Right ventricle myocardium superior (tissue), 1 donor: ENCODE measurements at regions of chr19 and their contacts with region 1.

Region 1: DNA sequence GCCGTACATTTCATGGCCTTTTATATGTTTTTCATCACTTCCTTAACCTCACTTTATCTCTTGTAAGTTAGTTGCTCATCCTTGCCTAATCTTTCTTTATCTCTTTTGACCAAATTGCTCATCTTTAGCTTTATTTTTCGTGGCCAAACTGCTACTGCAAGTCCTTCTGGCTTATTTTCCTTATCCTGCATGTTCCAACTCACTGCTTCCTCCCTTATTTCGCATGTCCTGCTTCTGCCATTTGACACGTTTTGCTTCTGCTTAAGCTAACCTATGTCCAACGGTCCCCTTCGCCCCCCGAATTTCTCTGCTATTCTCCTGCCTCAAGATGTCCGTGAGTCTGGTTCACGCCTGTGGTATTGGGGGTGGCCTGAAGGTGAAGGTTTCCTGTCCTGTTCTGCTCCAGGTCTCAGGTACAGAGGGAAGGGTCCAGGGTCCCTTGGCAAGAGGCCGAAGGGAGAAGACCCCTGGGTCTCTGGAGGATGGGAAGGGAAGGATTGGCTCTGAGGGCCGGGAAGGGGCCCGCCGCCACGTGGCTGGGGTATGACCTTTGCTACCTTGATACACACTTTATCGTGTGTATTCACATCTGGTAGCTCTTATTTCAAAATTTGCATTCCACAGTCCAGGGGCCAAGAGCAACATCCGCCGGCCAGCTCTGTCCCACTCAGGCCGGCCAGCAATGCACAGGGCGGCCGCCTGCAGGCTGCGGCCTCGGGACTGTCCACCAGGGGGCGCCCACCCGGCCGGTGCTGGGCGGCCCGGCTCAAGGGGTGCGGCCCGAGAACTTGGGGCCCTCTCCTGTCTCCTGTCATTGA is 2.9 kb upstream of the C19orf85 start:
- DNase-seq: peak; percentile 86
- ATAC-seq: peak; percentile 94

Region 2: DNA sequence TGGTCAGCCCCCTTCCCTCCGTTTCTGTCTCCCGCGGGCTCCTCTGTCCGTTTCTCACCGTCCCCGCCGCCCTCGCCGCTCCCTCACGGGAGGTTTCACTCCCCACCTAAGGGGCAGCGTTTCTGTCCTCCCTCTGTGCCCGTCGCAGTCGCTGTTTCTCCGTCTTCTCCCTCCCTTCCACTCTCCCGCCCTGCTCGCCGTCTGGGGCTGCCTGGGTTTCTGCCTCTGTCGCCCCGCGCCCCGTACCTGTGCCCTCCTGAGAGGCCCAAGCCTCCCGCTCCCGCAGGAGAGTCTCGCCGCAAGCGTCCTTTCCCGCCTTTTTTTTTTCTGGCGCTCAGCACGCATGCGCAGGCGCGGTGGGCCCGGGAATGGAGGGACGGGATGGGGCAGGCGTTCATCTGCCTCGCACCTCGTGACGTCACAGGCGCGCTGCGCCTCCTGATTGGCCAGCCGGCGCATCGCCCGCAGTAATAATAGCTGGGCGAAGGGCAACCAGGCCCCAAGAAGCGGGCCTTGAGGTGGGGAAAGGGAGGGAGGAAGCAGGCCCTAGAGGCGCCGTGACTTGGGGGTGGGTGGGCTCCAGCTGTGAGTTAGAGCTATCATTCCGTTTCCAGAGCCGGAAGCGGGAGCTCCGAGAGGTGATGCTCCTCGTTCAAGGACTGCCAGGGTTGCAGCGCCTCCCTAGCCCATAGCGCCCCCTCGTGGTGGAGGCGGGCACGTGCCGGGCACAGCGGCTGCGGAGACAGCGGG is 36.2 kb after region 1 on chr19:
- intact Hi-C with region 1: loop called (anchors 5 kb)
- DNase-seq: peak; percentile 97
- ATAC-seq: peak; percentile 99

Region 3: DNA sequence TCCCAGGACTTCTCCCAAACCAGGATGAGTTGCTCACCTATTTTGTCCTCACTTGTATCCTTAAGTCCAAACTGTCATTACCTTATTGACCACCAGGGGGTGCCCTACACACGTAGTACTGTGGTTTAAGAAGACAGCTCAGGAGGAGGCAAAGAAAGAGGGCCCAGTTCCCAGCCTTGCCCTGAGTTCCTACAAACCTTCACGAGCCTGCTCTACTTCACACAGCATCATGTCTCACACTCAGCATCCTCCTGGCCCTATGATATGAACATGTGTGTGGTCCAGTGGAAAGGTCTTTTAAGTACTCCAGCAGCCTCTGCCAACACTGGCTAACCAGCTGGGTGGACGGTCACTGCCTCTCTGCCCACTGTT is 165.0 kb after region 1 on chr19:
- intact Hi-C with region 1: loop called (anchors 5 kb)
- DNase-seq: peak; percentile 42
- ATAC-seq: peak; percentile 70

Region 4: DNA sequence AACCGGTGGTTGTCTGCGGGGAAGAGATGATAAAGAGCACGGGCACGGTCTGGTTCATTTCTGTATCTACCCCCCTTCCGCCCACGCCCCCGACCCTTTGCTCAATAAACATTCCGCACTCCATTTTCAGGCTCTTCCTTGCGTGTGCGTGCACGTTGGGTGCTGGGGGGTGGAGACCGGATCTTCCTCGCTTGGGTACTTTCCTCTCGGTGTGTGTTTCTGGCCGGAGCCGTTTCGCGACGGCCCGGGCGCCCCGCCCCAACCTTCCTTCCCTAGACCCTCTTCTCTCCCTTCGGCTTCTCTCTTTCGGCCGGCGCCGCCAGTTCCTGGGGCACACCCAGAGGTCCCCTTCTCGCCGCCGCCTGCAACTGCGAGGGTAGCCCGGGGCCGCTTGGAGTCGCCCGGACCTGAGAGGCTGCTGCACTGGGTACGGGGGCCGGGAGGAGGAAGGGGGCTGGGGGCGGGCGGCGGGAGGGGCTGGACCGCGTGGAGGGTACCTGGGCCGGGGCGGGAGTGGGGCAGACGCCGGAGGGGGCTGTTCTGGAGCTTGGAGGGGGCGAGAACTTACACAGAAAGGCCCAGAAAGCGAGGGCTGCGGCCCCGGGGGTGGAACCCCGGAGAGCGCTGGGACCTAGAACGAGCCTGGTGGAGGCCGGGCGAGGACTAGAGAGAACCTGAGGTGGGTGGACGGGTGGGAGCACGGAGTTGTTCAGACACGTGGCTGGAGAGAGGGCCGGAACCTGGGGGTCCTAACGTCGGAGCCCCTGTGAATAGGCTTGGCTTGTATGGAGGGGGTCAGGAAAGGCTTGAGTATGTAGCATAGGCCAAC is 176.1 kb after region 1 on chr19 and contains the start of gene ZNF581:
- intact Hi-C with region 1: no loop called
- DNase-seq: peak; percentile 84
- ATAC-seq: peak; percentile 53
- total RNA-seq, gene ZNF581: 7.1 TPM